Activated B cell treated with CpG ODN at 0.5 μM for 24 hours (primary cell): ENCODE measurements at regions of chr20 and their contacts with region 1.

Region 1: DNA sequence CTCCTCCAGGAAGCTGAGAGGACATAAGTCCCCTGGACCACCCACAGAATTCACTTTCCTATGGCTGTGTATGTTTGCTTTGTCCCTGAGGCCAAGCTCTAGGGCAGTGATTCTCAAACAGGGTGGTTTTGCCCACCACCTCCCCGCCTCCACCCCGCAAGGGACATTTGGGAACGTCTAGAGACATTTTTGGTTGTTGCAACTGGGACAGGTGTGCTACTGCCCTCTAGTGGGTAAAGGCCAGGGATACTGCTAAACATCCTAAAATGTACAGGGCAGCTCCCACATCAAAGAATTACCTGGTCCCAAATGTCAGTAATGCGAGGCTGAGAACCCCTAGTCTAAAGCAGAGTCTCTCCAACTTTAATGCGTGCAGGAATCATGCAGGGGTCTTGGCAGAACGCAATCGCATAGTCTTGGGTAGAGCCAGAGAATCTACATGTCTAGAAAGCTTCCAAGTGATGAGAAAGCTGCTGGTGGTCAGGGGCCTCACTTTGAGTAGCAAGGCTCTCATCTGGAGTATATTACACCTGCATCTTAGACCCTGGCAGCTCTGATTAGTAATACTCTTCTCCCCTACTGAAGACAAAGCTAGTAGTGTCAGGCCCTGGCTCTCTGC is 5.1 kb downstream of the KCNS1 start:
- DNase-seq: no peak
- ATAC-seq: peak; percentile 65
- H3K4me3 Mint-ChIP-seq: no peak overlapping the region
- H3K27ac Mint-ChIP-seq: no peak overlapping the region
- H3K4me1 Mint-ChIP-seq: peaks cover 19% of the 10 kb centered on the region
- H3K27me3 Mint-ChIP-seq: peaks cover 29% of the 10 kb centered on the region
- CTCF ChIP-seq: peak; percentile 36

Region 2: GRCh38 chr20:44683263-44684046 is 412.4 kb before region 1 on chr20:
- CTCF ChIA-PET with region 1: no interaction called
- POLR2A ChIA-PET with region 1: no interaction called
- intact Hi-C with region 1: loop called (anchors 5 kb)
- DNase-seq: no peak
- ATAC-seq: peak; percentile 37
- H3K4me3 Mint-ChIP-seq: no peak overlapping the region
- H3K27ac Mint-ChIP-seq: no peak overlapping the region
- H3K4me1 Mint-ChIP-seq: peaks cover 2% of the 10 kb centered on the region
- H3K27me3 Mint-ChIP-seq: peaks cover 6% of the 10 kb centered on the region
- CTCF ChIP-seq: no peak

Region 3: DNA sequence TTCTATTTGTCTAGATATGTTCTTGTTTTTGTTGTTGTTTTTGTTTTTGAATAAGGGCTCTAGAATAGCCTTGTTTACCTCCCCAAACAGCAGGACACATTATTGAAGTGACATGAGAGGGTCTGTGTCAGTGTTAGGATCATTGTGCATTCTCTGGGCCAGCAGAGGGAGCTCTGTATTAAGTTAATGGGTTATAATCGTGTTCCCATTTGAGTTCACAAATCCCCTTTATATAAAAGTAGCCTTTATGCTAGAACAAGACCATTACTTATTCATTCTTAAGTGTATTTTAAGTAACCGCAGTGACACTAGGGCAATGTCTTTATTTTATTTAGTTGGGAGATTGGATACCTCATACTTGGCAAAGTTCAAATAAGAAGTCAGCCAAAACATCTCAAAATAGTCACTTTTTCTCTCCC is 84.7 kb before region 1 on chr20:
- CTCF ChIA-PET with region 1: interaction called, 31 read pairs
- POLR2A ChIA-PET with region 1: no interaction called
- intact Hi-C with region 1: loop called (anchors 1 kb)
- DNase-seq: no peak
- ATAC-seq: peak; percentile 57
- H3K4me3 Mint-ChIP-seq: no peak overlapping the region
- H3K27ac Mint-ChIP-seq: peak overlapping the region; percentile 33
- H3K4me1 Mint-ChIP-seq: peaks cover 19% of the 10 kb centered on the region
- H3K27me3 Mint-ChIP-seq: no peaks in the 10 kb centered on the region
- CTCF ChIP-seq: no peak

Region 4: DNA sequence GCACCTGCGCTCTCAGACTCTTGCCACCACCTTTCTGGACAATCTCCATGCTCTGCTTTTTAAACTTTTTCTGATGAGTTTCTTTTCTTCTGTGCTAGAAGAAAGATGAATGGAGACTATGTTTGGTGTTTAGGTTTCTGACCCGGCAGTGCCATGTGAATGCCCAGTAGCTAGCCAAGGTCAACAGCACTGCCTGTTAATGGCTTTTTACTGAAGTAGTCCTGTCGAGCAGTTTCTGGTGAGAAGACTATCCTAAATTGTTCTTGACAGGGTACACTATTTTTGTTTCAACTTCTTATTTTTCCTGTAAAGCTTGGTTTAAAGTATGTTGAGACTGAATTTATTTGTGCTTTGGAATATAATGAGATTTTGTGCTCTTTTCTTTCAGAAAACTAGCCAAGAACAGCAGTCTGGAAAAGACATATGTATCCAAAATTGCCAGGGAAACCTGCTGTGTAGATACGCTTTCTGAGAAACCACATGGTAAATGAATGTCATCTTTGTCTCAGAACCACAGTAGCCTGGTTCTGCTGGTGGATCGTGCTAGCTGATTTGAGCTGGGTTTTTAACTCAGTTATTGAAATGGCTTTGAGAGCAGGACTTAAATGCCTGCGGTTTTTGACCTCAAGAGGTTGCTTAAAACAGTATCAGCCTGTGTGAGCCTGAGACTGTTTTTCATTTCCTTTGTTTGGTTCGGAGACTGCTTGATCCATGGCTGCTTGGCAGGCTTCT is 43.0 kb before region 1 on chr20:
- CTCF ChIA-PET with region 1: interaction called, 28 read pairs
- POLR2A ChIA-PET with region 1: no interaction called
- intact Hi-C with region 1: no loop called
- DNase-seq: no peak
- ATAC-seq: peak; percentile 26
- H3K4me3 Mint-ChIP-seq: no peak overlapping the region
- H3K27ac Mint-ChIP-seq: peak overlapping the region; percentile 89
- H3K4me1 Mint-ChIP-seq: peaks cover 80% of the 10 kb centered on the region
- H3K27me3 Mint-ChIP-seq: no peaks in the 10 kb centered on the region
- CTCF ChIP-seq: no peak

Region 5: GRCh38 chr20:45293041-45294002 is 197.5 kb after region 1 on chr20:
- CTCF ChIA-PET with region 1: interaction called, 16 read pairs
- POLR2A ChIA-PET with region 1: no interaction called
- intact Hi-C with region 1: loop called (anchors 1 kb)
- DNase-seq: peak; percentile 78
- ATAC-seq: peak; percentile 89
- H3K4me3 Mint-ChIP-seq: peak overlapping the region; percentile 80
- H3K27ac Mint-ChIP-seq: no peak overlapping the region
- H3K4me1 Mint-ChIP-seq: peaks cover 21% of the 10 kb centered on the region
- H3K27me3 Mint-ChIP-seq: peaks cover 27% of the 10 kb centered on the region
- CTCF ChIP-seq: peak; percentile 87